ENCODE measurements at regions of chr7 and their contacts with region 1.

Region 1: GRCh38 chr7:40793132-40793531 is 658.3 kb downstream of the SUGCT start:
- DNase-seq: peak; percentile 71
- ATAC-seq: peak; percentile 95
- H3K4me3 ChIP-seq: no peak overlapping the region
- H3K27ac ChIP-seq: no peak overlapping the region
- H3K4me1 ChIP-seq: peaks cover 8% of the 10 kb centered on the region; the same call in 1 of the 2 replicates
- H3K27me3 ChIP-seq: no peaks in the 10 kb centered on the region
- CTCF ChIP-seq: no peak

Region 2: DNA sequence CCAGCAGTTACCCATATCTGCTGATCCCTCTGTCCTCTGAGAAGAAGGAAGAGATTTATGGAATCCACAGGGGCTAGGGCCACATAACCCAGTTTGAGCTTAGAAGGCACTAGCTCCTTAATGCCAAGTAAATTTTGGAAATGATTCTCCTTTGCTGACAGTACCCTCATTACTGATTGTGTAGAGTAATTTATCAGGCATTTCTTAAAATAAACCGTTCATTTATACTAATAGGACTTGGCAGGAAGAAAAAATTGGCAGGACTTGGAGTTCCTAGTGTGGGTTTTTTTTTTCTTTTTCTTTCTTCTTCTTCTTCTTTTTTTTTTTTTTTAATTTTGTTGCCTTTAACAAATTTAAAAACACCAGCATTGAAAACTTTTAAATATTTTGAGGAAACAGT is 12.7 kb before region 1 on chr7:
- CTCF ChIA-PET with region 1: no interaction called
- POLR2A ChIA-PET with region 1: no interaction called
- intact Hi-C with region 1: no loop called
- DNase-seq: no peak
- ATAC-seq: no peak
- H3K4me3 ChIP-seq: no peak overlapping the region
- H3K27ac ChIP-seq: no peak overlapping the region
- H3K4me1 ChIP-seq: no peaks in the 10 kb centered on the region
- H3K27me3 ChIP-seq: no peaks in the 10 kb centered on the region
- CTCF ChIP-seq: no peak

Region 3: DNA sequence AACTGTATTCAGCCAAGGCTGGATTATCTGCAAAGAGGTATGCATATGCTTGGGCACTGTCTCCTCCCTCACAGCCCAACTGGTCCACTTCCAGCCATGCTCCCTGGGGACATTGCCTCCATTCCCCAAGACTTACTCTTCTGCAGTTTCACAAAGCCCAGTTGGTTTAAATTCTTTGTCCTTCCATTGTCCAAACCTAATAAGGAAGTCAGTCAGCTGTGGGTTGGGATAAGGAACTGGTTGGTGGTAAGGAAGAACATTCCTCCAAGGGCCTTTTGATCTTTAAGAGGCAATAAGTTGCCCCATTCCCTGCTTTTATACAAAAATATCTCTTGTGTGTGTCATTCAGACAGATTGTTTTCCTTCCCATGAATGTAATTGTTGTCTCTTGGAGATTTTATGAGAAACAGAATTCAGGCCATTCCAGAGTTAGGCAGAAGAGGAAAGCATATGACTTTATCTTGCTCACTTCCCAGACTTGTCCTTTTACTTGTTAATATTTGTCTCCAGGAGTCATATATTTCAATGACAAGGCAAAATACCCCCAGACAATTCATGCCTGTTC is 15.3 kb after region 1 on chr7:
- CTCF ChIA-PET with region 1: no interaction called
- POLR2A ChIA-PET with region 1: no interaction called
- intact Hi-C with region 1: loop called (anchors 1 kb)
- DNase-seq: peak; percentile 73
- ATAC-seq: peak; percentile 86
- H3K4me3 ChIP-seq: no peak overlapping the region
- H3K27ac ChIP-seq: peak overlapping the region; percentile 92
- H3K4me1 ChIP-seq: peaks cover 24% of the 10 kb centered on the region
- H3K27me3 ChIP-seq: no peaks in the 10 kb centered on the region
- CTCF ChIP-seq: no peak

Region 4: GRCh38 chr7:40986351-40986873 is 193.3 kb after region 1 on chr7:
- CTCF ChIA-PET with region 1: no interaction called
- POLR2A ChIA-PET with region 1: no interaction called
- intact Hi-C with region 1: no loop called
- DNase-seq: peak; percentile 76
- ATAC-seq: peak; percentile 97
- H3K4me3 ChIP-seq: peak overlapping the region; percentile 22; the same call in 1 of the 2 replicates
- H3K27ac ChIP-seq: peak overlapping the region; percentile 90
- H3K4me1 ChIP-seq: peaks cover 16% of the 10 kb centered on the region
- H3K27me3 ChIP-seq: no peaks in the 10 kb centered on the region
- CTCF ChIP-seq: no peak

Region 5: GRCh38 chr7:41439515-41439879 is 646.4 kb after region 1 on chr7:
- CTCF ChIA-PET with region 1: no interaction called
- POLR2A ChIA-PET with region 1: no interaction called
- intact Hi-C with region 1: no loop called
- DNase-seq: no peak
- ATAC-seq: no peak
- H3K4me3 ChIP-seq: no peak overlapping the region
- H3K27ac ChIP-seq: no peak overlapping the region
- H3K4me1 ChIP-seq: peaks cover 16% of the 10 kb centered on the region
- H3K27me3 ChIP-seq: no peaks in the 10 kb centered on the region
- CTCF ChIP-seq: no peak

Measured in PC-3 (cell line).